BJ (cell line): ENCODE measurements at regions of chr14 and their contacts with region 1.

Region 1: GRCh38 chr14:23120541-23121251 is 1.6 kb upstream of the CEBPE start:
- DNase-seq: no peak
- H3K4me3 ChIP-seq: no peak overlapping the region
- H3K27me3 ChIP-seq: no peaks in the 10 kb centered on the region
- CTCF ChIP-seq: peak; percentile 100

Region 2: GRCh38 chr14:22185191-22185590 is 935.5 kb before region 1 on chr14:
- CTCF ChIA-PET with region 1: no interaction called
- POLR2A ChIA-PET with region 1: no interaction called
- DNase-seq: no peak
- H3K4me3 ChIP-seq: no peak overlapping the region
- H3K27me3 ChIP-seq: no peaks in the 10 kb centered on the region
- CTCF ChIP-seq: no peak

Region 3: DNA sequence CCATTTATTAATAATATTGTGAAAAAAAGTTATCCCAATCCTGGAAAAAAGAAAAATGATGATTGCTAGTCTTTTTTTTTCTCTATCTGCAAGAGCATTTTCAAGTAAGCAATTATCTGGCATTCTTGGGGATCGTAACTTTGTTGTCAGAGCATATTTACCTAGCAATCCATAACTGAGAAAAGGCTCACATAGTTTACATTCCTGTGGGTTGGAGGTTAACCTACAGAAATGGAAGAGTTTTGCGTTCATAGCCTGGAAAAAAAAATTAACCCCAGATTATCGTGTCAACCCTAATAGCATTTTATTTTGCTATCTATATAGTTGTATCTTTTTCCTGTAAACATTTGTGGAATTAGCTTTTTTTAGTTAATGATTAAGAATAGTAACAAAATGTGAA is 824.0 kb before region 1 on chr14:
- CTCF ChIA-PET with region 1: no interaction called
- POLR2A ChIA-PET with region 1: no interaction called
- DNase-seq: peak; percentile 47
- H3K4me3 ChIP-seq: no peak overlapping the region
- H3K27me3 ChIP-seq: peaks cover 11% of the 10 kb centered on the region
- CTCF ChIP-seq: no peak

Region 4: DNA sequence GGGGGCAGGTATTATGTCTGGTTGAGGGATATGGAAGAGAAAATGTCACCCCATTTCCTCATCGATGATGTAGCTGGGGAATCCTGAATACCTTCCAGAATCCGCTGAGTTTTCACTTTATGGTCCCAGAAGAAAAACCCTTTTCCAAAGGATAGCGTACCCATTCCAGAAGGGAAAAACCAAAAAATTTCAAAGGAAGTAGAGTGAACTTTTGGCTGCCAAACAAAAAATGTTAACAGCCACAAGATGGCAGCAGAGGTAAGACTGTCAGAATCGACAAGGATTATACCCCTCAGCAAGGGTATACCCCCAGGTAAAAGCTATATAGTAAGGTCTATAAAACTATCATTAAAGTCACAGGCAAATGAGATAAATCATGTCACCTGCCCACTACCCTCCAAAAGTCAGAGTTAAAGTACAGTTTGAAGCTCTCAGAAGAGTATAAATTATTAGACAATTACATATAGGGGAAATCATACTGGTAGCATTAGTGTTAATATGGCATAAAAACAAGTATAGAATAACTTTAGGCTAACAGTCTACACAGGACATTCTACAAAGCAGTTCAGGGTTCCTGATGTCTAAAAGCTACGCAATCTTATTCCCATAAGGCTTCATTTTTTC is 43.8 kb before region 1 on chr14:
- CTCF ChIA-PET with region 1: interaction called, 120 read pairs
- POLR2A ChIA-PET with region 1: no interaction called
- DNase-seq: no peak
- H3K4me3 ChIP-seq: no peak overlapping the region
- H3K27me3 ChIP-seq: no peaks in the 10 kb centered on the region
- CTCF ChIP-seq: peak; percentile 70

Region 5: DNA sequence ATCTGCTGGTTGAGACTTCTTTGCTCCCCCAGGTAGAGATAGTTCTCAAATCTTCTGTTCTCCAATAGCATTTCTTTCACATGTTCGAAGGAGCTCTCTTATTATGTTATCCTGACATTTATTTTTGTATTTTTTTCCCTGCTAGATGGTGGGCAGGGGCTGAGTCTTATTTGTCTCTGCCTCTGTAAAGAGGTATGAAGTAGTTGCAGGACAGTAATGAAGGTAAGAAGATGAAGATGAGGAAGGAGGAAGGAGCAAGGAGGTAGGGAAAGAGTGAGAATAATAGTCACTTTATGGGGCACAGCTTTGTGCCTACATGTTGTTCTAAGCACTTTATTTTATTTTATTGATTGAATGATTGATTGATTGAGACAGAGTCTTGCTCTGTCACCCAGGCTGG is 10.9 kb before region 1 on chr14:
- CTCF ChIA-PET with region 1: interaction called, 13 read pairs
- POLR2A ChIA-PET with region 1: no interaction called
- DNase-seq: no peak
- H3K4me3 ChIP-seq: no peak overlapping the region
- H3K27me3 ChIP-seq: peaks cover 1% of the 10 kb centered on the region; the same call in 1 of the 2 replicates
- CTCF ChIP-seq: no peak

Region 6: DNA sequence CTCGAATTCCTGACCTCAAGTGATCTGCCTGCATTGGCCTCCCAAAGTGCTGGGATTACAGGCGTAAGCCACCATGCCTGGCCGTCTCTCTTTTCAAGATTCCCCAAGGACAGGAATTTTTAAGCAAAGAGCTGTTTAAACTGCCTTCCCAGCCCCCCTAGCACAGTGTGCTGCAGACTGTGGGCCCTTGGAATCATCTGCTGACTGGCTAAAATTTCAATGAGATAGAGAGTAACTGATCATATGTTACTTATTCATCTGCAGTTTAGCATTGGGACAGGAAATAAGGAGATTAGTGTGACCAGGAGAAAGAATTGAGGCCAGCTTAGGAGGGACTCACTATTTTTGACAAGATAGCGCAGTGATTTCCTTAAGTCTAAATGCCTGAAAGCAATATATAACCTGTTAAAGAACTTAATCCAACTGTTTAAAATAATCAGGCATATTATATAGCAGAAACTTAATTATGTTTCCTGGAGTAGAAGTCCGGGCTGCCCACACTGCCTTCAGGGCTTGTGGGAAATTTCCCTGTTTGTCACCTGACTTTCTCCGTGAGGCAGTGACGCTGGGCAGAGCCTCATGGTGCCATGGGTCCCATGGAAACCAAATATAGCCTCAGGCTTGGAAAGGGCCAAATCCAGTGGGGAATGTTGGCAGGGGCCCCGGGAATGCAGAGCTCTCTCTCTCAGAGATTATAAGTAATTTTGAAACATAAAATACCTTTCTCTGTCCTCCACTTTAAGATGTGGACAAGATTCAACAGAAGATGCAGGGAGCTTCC is 21.2 kb after region 1 on chr14:
- CTCF ChIA-PET with region 1: interaction called, 29 read pairs
- POLR2A ChIA-PET with region 1: no interaction called
- DNase-seq: no peak
- H3K4me3 ChIP-seq: no peak overlapping the region
- H3K27me3 ChIP-seq: no peaks in the 10 kb centered on the region
- CTCF ChIP-seq: no peak

Region 7: DNA sequence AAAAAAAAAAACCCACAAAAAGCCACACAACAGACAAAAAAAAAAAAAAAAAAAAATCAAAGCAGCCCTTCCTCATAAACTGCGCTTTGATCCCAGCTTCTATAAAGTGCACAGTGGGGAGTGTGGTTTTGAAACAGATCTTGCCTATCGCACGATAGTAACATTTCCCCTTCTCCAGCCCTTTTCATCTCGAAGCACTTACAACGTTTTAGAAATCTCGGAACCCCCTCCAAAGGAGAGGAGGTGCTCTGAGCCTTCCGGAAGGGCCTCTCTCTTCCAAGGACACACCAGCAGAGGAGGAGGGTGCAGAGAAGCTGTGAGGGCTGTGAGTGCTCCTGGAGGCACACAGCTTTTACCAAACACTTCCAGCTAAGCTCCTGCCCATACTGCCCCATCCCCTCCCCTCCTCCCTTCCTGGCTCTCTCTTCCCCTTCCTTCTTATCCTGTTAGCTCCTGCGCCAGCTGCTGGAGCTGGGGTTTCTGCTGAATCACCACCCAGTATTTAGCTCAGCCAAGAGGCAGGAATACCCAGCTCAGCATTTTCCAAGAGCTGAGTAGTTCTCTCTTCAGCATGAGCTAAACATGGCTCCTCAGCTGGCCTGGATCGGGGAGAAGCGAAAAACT is 34.4 kb after region 1 on chr14:
- CTCF ChIA-PET with region 1: interaction called, 13 read pairs
- POLR2A ChIA-PET with region 1: no interaction called
- DNase-seq: no peak
- H3K4me3 ChIP-seq: no peak overlapping the region
- H3K27me3 ChIP-seq: no peaks in the 10 kb centered on the region
- CTCF ChIP-seq: 0 out of 2 replicates have a peak, but pooled peaks have one; percentile 3

Region 8: DNA sequence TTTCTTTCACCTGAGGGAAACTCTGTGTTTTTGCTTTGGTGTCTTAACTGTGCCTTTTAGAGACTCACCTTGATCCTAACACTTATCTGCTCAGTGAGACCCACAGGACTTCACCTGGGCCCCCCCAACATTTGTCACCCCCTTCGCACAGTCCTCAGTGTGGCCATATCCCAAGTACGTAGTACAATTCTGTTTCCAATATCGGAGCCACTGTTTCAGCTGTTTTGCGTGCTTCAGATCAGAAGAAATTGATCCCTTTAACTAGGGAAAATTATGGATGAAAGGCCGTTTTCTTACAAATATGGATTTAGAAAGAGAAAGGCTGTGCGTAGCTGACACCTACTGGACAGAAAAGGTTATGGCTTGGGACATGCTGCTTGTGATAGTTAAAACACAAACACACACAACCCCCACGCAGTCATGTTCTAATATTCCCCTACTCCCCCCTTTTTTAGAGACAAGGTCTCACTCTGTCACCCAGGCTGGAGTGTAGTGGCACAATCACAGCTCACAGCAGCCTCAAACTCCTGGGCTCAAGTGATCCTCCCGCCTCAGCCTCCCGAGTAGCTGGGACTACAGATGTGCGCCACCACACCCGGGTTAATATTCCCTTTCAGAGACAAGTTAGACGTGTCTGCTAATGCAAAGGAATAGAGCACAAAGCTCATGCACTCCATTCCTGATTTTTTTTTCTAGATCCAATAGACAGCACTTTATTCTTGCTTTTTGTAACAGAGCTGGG is 66.4 kb after region 1 on chr14:
- CTCF ChIA-PET with region 1: interaction called, 815 read pairs
- POLR2A ChIA-PET with region 1: no interaction called
- DNase-seq: no peak
- H3K4me3 ChIP-seq: no peak overlapping the region
- H3K27me3 ChIP-seq: peaks cover 1% of the 10 kb centered on the region; the same call in 1 of the 2 replicates
- CTCF ChIP-seq: peak; percentile 80